WTC11 (cell line): ENCODE measurements at regions of chrX and their contacts with region 1.

Region 1: GRCh38 chrX:71953946-71954345 is 43.3 kb downstream of the NHSL2 start:
- DNase-seq: no peak
- ATAC-seq: no peak
- H3K4me3 Mint-ChIP-seq: no peak overlapping the region
- H3K27ac Mint-ChIP-seq: peak overlapping the region; percentile 91
- H3K4me1 Mint-ChIP-seq: peaks cover 77% of the 10 kb centered on the region
- H3K27me3 Mint-ChIP-seq: no peaks in the 10 kb centered on the region
- CTCF ChIP-seq: no peak

Region 2: DNA sequence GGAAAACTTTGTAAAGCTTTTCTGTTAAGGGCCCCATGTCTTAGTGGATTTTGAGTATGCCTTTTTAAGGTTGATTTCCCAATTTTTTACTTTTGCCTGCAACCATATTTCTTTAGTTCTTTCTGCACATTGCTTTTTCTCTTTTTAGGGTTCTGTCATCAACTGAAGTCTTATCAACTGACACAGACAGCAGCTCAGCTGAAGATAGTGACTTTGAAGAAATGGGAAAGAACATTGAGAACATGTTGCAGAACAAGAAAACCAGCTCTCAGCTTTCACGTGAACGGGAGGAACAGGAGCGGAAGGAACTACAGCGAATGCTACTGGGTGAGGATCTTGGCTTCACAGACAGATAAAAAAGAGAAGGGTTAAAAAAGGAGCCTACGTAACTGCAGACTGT is 560.0 kb before region 1 on chrX:
- CTCF ChIA-PET with region 1: no interaction called
- POLR2A ChIA-PET with region 1: no interaction called
- DNase-seq: no peak
- ATAC-seq: no peak
- H3K4me3 Mint-ChIP-seq: no peak overlapping the region
- H3K27ac Mint-ChIP-seq: no peak overlapping the region
- H3K4me1 Mint-ChIP-seq: no peaks in the 10 kb centered on the region
- H3K27me3 Mint-ChIP-seq: no peaks in the 10 kb centered on the region
- CTCF ChIP-seq: no peak

Region 3: GRCh38 chrX:72003811-72004750 is 50.1 kb after region 1 on chrX:
- CTCF ChIA-PET with region 1: interaction called, 15 read pairs
- POLR2A ChIA-PET with region 1: interaction called, 6 read pairs
- DNase-seq: peak; percentile 73
- ATAC-seq: peak; percentile 90
- H3K4me3 Mint-ChIP-seq: peak overlapping the region; percentile 43
- H3K27ac Mint-ChIP-seq: peak overlapping the region; percentile 73
- H3K4me1 Mint-ChIP-seq: peaks cover 55% of the 10 kb centered on the region
- H3K27me3 Mint-ChIP-seq: no peaks in the 10 kb centered on the region; the same call in 1 of the 2 replicates
- CTCF ChIP-seq: no peak